Activated CD4-positive, alpha-beta memory T cell treated with anti-CD3 and anti-CD28 coated beads for 36 hours (primary cell): ENCODE measurements at regions of chrX and their contacts with region 1.

Region 1: DNA sequence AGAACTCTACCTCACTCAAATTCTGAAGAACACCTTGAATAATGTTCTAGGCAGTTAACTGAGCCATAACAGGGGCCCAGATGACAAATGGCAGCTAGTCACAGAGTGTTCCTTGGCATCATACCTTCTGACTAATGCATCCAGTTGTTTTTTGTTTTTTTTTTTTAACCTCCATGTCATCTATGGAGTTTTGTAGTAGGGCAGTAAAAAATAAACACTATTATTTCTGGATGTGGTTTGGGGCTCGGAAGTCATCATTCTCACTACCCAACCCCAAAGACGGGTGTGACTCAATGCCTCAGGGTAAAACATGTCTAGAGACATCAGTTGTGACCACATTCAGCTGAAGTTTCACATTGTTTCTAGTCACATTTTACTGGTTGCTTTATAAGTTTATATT is 31.2 kb upstream of the MCF2 start:
- DNase-seq: peak; percentile 29
- H3K4me3 Mint-ChIP-seq: no peak overlapping the region
- H3K27ac Mint-ChIP-seq: peak overlapping the region; percentile 49
- H3K4me1 Mint-ChIP-seq: peaks cover 6% of the 10 kb centered on the region
- H3K27me3 Mint-ChIP-seq: no peaks in the 10 kb centered on the region

Region 2: GRCh38 chrX:139691843-139692505 is 47.2 kb before region 1 on chrX:
- CTCF ChIA-PET with region 1: no interaction called
- POLR2A ChIA-PET with region 1: no interaction called
- intact Hi-C with region 1: no loop called
- DNase-seq: no peak
- H3K4me3 Mint-ChIP-seq: no peak overlapping the region
- H3K27ac Mint-ChIP-seq: no peak overlapping the region
- H3K4me1 Mint-ChIP-seq: peaks cover 2% of the 10 kb centered on the region
- H3K27me3 Mint-ChIP-seq: peaks cover 7% of the 10 kb centered on the region

Region 3: GRCh38 chrX:139766545-139766983 is 27.4 kb after region 1 on chrX:
- CTCF ChIA-PET with region 1: interaction called, 3 read pairs
- POLR2A ChIA-PET with region 1: no interaction called
- intact Hi-C with region 1: loop called (anchors 1 kb)
- DNase-seq: peak; percentile 29
- H3K4me3 Mint-ChIP-seq: no peak overlapping the region
- H3K27ac Mint-ChIP-seq: no peak overlapping the region
- H3K4me1 Mint-ChIP-seq: no peaks in the 10 kb centered on the region
- H3K27me3 Mint-ChIP-seq: no peaks in the 10 kb centered on the region

Region 4: GRCh38 chrX:139844884-139845283 is 105.7 kb after region 1 on chrX:
- CTCF ChIA-PET with region 1: no interaction called
- POLR2A ChIA-PET with region 1: no interaction called
- intact Hi-C with region 1: no loop called
- DNase-seq: no peak
- H3K4me3 Mint-ChIP-seq: no peak overlapping the region
- H3K27ac Mint-ChIP-seq: no peak overlapping the region
- H3K4me1 Mint-ChIP-seq: peaks cover 5% of the 10 kb centered on the region
- H3K27me3 Mint-ChIP-seq: no peaks in the 10 kb centered on the region